ENCODE measurements at regions of chr1 and their contacts with region 1.

Region 1: GRCh38 chr1:185595835-185596667 is 138.1 kb upstream of the HMCN1 start:
- DNase-seq: peak; percentile 46 to 54 (median 47)
- H3K4me3 ChIP-seq: no peak overlapping the region
- H3K27ac ChIP-seq: no peak overlapping the region
- H3K4me1 ChIP-seq: peaks cover 0 to 7% (median 4%) of the 10 kb centered on the region in 4 experiments
- H3K27me3 ChIP-seq: no peaks in the 10 kb centered on the region

Region 2: DNA sequence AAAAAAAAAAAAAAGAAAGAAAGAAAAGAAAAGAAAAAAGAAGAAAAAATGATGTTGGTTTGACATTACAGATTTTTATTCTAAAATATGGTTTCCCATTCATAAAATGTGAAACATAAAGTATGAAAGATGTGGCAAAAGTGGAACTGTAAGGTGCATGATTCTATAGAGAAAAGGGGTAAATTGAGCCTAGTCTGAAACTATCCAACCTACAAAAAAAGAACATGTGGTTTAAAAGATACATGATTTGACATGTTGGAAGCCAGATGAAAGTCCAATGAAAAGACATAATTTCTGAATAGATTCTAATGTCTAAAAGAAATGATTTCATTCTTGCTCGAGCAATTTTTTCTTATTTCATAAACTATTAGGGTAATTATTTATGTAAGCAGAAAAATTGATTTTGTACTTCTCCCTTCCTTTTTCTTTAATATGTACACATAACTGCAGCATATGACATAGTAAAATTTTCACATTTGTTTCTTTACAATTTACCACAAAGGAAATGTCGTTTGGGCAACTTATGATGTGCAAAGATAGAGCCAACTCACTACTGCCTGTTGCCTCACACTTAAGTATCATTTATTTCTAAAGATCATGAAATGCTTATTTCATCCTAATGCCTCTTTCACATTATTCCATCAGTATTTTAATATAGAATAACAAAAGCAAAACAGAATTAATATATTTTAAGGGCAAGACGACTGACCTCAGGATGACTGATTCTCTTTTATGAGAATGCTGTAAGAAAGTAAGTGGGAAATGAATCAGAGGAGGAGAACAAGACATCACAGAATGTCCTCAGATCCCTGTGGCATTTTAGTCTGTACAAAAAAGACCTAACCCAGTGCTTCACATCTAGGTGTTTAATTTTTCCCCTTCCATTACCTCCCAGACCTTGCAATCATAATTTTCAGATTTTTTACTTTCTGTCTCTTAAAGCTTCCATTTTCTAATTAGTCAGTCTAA is 27.6 kb before region 1 on chr1:
- CTCF ChIA-PET with region 1: interaction called, 18 read pairs
- POLR2A ChIA-PET with region 1: interaction called, 4 read pairs
- DNase-seq: peak; percentile 52 to 89 (median 81)
- H3K4me3 ChIP-seq: peak overlapping the region in 3 of 7 experiments; percentile 12 to 43 (median 13)
- H3K27ac ChIP-seq: peak overlapping the region; percentile 92 to 95
- H3K4me1 ChIP-seq: peaks cover 26 to 43% (median 33%) of the 10 kb centered on the region in 4 experiments
- H3K27me3 ChIP-seq: no peaks in the 10 kb centered on the region

Region 3: DNA sequence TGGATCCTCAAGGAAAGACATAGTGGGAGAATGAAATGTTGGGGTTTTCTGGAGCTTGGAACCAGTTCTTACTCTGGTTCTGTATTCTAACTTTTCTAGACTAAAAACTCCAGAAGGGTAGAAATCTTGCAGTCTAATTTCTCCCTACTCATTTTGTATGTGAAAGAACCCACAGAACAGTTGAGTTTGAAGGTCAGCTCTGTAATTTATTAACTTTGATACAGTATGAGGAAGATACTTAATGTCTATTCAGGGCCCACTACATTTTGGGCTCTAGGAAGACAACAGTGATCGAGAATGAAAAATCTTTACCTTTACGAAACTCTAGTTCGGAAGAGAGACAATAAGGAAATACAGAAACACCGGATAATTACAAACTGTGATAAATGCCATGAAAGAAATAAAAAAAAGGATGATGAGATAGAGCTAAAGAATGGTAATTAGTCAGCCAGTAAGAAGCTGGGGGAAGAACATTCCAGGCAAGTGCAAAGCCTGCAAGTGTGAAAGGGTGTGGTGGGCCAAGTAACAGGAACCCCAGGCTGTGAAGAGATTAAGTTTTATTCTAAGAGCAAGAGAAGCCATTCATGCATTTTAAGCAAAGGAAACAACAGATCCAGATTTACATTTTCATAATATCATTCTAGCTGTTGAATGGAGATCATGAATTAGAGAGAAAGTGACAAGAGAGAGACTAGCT is 21.8 kb before region 1 on chr1:
- CTCF ChIA-PET with region 1: interaction called, 18 read pairs
- POLR2A ChIA-PET with region 1: no interaction called
- DNase-seq: no peak
- H3K4me3 ChIP-seq: no peak overlapping the region
- H3K27ac ChIP-seq: no peak overlapping the region
- H3K4me1 ChIP-seq: peaks cover under 1 to 7% (median 4%) of the 10 kb centered on the region in 4 experiments
- H3K27me3 ChIP-seq: no peaks in the 10 kb centered on the region

Region 4: DNA sequence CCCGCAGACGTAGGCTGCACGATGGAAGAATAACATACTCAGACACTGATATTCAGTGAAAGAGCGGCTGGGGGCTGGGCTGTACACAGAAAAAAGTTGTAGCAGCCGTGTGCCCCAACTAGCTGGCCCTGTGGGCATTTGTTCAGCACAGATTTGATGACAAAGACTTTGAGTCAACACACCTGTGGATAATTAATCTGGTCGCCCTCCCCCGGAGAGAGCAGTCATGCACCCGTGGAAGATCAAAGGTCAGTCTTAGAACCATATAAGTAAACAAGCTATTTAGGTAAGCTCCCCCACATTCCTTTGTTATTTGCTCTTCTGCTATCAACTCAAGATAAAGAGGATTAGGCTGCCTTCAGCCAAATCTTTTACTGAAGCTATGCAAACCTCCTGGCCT is 10.3 kb before region 1 on chr1:
- CTCF ChIA-PET with region 1: no interaction called
- POLR2A ChIA-PET with region 1: no interaction called
- DNase-seq: no peak
- H3K4me3 ChIP-seq: no peak overlapping the region
- H3K27ac ChIP-seq: no peak overlapping the region
- H3K4me1 ChIP-seq: no peaks in the 10 kb centered on the region
- H3K27me3 ChIP-seq: no peaks in the 10 kb centered on the region